Head of caudate nucleus (tissue), 42 donors: ENCODE measurements at regions of chr6 and their contacts with region 1.

Region 1: DNA sequence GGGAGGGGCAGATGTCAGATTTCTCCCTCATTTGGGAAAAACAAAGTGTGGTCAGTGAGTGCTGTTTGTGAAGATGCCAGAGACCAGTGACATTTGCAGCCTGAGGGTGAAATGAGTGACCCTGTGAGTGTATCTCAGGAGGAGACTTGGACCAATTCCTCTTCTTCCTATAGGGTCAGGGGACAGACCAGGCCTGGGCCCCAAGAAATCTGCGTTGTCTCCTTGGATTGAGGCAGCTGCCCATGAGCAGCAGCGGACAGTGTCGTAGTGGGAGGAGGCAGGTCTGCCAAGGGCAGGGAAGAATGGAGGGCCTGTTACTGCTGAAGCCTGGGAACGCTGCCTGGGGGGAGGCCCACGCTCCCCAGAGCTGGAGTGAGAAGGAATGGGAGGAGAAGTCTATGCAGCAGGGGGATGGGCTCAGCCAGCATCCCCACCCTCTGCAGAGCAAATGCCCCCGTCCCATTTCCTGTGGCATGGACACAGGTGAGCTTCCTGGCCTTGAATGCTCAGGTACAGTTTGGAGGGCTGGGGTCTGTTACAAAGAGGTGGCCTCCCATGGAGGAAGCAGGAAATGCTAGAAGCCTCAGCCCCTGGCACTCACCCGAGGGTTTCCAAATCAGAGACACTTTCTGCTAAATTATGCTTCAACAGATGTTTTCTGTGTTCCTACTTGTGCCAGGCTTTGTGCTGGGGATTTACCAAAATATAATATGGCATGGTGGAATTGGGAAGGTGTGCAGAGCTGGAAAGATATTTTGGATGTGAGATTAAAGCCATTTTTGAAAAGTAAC is 29.8 kb downstream of the DAAM2 start:
- DNase-seq: peak; percentile 65 to 92 (median 84)

Region 2: DNA sequence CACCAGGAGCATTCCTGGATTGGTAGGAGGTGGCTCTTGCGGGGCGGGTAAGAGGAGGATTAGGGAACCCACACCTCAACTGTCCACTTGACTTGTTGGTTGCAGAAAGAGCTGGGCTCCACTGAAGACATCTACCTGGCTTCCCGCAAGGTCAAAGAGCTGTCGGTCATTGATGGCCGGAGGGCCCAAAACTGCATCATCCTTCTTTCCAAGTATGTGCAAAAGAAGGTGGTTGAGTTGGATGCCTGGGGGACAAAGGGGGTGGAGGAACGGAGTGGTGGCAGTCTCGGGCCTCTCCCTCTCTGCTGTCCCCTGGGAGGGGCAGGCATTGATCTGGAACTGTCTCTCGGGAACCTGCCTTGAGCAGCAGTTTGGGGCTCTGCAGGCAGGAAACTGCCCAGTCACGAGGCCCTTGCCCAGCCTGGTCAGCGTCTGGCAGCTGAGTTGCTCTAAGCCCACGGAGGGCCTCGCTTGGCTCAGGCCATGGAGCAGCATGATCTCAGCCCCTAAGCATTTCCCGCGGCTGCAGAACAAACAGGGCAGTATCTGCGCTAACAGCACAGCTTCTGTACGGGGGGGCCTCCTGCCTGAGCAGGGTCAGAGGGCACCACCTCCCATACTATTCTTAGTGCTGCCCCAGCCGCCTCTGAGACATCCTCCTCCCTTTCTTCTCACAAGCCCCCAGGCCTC is 65.6 kb after region 1 on chr6:
- intact Hi-C with region 1: loop called (anchors 10 kb)
- DNase-seq: peak; percentile 65 to 94 (median 88)